Left ventricle myocardium inferior (tissue), 1 donor: ENCODE measurements at regions of chr2 and their contacts with region 1.

Region 1: DNA sequence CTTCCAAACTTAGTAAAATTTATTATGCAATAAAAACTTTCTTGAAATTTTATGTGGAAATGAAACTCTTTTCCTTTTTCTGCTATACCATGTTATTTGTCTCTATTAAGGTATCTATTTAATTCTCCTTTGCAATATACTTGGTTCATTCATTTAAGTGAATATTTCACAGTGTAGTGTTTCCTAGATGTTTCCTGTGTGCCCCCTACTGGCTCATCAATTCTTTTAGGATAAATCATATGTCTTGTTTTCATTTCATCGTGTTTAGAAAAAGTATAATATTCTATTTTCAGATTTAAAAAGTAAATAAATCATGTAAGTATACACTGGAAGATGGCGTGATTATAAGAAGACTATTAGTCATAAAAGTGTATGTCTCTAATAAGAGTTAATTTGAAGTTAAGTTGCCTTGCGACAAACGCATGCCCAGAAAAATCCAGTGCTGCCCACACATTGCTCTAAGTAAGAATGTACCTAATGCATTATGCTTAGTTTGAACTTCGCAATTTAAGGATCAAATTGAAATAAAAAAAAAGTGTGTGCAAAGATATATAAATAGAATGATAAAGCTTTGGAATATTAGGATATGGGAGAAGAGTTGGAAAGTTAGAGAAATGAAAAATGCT is 525.4 kb downstream of the KCNJ3 start:
- DNase-seq: no peak
- H3K4me3 ChIP-seq: no peak overlapping the region
- H3K27ac ChIP-seq: no peak overlapping the region
- H3K4me1 ChIP-seq: no peaks in the 10 kb centered on the region
- H3K27me3 ChIP-seq: no peaks in the 10 kb centered on the region
- CTCF ChIP-seq: peak; percentile 50

Region 2: GRCh38 chr2:154439156-154439555 is 784.7 kb before region 1 on chr2:
- intact Hi-C with region 1: loop called (anchors 10 kb)
- DNase-seq: no peak
- H3K4me3 ChIP-seq: no peak overlapping the region
- H3K27ac ChIP-seq: no peak overlapping the region
- H3K4me1 ChIP-seq: no peaks in the 10 kb centered on the region
- H3K27me3 ChIP-seq: no peaks in the 10 kb centered on the region
- CTCF ChIP-seq: peak; percentile 30